OCI-LY7 (cell line): ENCODE measurements at regions of chr6 and their contacts with region 1.

Region 1: DNA sequence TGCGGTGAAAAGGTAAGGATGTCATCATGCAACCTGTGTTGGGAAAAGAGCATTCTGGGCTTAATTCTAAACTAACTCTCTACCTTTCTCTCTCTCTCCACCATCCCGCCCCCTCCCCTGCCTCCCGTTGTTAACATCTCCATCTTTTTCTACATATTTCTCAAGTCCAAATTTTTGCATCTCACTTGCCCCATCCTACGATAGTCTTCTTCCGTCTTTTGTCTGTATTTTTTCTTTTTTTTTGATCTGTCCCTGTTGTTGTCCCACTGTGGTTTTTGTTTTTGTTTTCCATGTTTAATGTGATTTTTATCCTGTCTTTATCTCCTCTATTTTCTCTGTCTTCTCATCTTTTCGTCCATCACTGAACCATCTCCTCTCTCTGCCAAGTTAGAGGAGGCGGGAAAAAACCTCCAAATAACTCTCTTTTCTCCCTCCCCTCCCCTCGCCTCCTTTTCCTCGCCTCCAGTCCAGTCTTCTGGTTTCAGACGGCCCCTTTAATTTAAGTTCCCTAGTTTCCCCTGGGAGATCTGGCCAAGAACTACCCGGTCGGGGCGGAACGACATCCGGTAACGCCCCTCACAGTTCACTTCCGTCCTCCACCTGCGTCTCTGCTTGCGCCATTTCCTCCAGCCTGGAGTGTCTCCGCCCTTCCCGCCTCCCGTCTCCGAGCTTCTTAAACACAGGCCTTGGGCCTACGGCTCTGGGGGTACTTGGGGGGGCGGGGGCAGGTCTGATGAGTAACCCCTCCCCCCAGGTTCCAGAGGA is at the start of gene NFKBIL1:
- DNase-seq: peak; percentile 99
- H3K4me3 ChIP-seq: peak within 1 kb of the TSS; percentile 67
- H3K27ac ChIP-seq: peak within 1 kb of the TSS; percentile 64
- H3K4me1 ChIP-seq: peaks cover 62% of the 10 kb centered on the region
- CTCF ChIP-seq: peak; percentile 28; the same call in 1 of the 2 replicates
- total RNA-seq, gene NFKBIL1: 17.1 and 21.8 TPM in 2 replicates

Region 2: GRCh38 chr6:30759575-30760239 is 787.4 kb before region 1 on chr6:
- CTCF ChIA-PET with region 1: no interaction called
- POLR2A ChIA-PET with region 1: no interaction called
- intact Hi-C with region 1: no loop called
- DNase-seq: no peak
- H3K4me3 ChIP-seq: no peak overlapping the region
- H3K27ac ChIP-seq: no peak overlapping the region
- H3K4me1 ChIP-seq: peaks cover 8% of the 10 kb centered on the region
- CTCF ChIP-seq: no peak

Region 3: GRCh38 chr6:31383149-31383548 is 164.0 kb before region 1 on chr6:
- CTCF ChIA-PET with region 1: no interaction called
- POLR2A ChIA-PET with region 1: no interaction called
- intact Hi-C with region 1: no loop called
- DNase-seq: no peak
- H3K4me3 ChIP-seq: no peak overlapping the region
- H3K27ac ChIP-seq: no peak overlapping the region
- H3K4me1 ChIP-seq: no peaks in the 10 kb centered on the region
- CTCF ChIP-seq: no peak

Region 4: DNA sequence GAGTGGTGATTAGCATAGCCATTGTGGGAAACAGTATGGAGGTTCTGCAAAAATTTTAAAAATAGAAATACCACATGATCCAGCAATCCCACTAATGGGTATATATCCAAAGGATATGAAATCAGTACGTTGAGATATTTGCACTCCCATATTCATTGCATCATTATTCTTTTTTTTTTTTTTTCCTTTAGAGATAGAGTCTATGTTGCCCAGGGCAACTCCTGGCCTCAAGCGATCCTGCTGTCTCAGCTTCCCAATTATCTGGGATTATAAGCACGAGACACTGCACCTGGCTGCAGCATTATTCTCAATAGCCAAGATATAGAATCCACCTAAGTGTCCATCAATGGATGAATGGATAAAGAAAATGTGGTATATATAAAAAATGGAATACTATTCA is 25.3 kb before region 1 on chr6:
- CTCF ChIA-PET with region 1: no interaction called
- POLR2A ChIA-PET with region 1: no interaction called
- intact Hi-C with region 1: no loop called
- DNase-seq: no peak
- H3K4me3 ChIP-seq: no peak overlapping the region
- H3K27ac ChIP-seq: no peak overlapping the region
- H3K4me1 ChIP-seq: no peaks in the 10 kb centered on the region
- CTCF ChIP-seq: no peak

Region 5: GRCh38 chr6:31575335-31575901 is 28.3 kb after region 1 on chr6 and contains the start of gene TNF:
- CTCF ChIA-PET with region 1: interaction called, 7 read pairs
- POLR2A ChIA-PET with region 1: interaction called, 10 read pairs
- intact Hi-C with region 1: no loop called
- DNase-seq: peak; percentile 61
- H3K4me3 ChIP-seq: peak within 1 kb of the TSS; percentile 69
- H3K27ac ChIP-seq: peak within 1 kb of the TSS; percentile 42
- H3K4me1 ChIP-seq: peaks cover 88% of the 10 kb centered on the region
- CTCF ChIP-seq: no peak
- total RNA-seq, gene TNF: 1.7 and 3.5 TPM in 2 replicates

Region 6: GRCh38 chr6:31597006-31597405 is 49.9 kb after region 1 on chr6:
- CTCF ChIA-PET with region 1: interaction called, 32 read pairs
- POLR2A ChIA-PET with region 1: interaction called, 34 read pairs
- intact Hi-C with region 1: loop called (anchors 1 kb)
- DNase-seq: peak; percentile 82
- H3K4me3 ChIP-seq: no peak overlapping the region
- H3K27ac ChIP-seq: no peak overlapping the region
- H3K4me1 ChIP-seq: peaks cover 29% of the 10 kb centered on the region
- CTCF ChIP-seq: peak; percentile 84

Region 7: DNA sequence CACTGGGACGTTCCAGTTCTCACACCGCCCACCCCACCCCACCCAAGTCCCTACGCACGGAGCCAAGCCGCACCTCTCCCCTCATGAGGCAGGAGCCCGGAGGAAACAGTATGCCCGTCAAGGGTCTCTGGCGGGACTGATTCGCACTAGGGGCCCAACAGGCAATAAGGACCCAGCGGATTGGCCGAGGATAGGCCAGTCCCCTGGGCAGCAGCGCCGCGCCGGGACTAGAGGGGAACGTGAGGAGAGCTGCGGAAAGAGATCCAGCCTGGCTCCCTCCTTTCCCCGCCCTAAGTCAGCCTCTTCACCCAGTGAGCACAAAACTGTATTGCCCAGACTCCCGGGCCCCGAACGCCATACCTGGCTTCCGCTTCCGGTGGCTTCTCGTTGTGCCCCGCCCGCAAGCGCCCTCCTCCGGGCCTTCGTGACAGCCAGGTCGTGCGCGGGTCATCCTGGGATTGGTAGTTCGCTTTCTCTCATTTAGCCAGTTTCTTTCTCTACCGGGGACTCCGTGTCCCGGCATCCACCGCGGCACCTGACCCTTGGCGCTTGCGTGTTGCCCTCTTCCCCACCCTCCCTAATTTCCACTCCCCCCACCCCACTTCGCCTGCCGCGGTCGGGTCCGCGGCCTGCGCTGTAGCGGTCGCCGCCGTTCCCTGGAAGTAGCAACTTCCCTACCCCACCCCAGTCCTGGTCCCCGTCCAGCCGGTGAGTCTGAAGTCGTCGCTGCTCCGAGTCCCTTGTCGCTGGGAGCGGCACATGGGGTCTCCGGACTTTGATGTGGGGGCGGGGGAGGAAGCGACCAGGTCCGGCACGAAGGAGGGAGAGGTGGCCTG is 118.6 kb after region 1 on chr6 and contains the start of gene CSNK2B:
- CTCF ChIA-PET with region 1: no interaction called
- POLR2A ChIA-PET with region 1: interaction called, 4 read pairs
- intact Hi-C with region 1: loop called (anchors 1 kb)
- DNase-seq: peak; percentile 98
- H3K4me3 ChIP-seq: peak within 1 kb of the TSS; percentile 99
- H3K27ac ChIP-seq: peak within 1 kb of the TSS; percentile 90
- H3K4me1 ChIP-seq: peaks cover 43% of the 10 kb centered on the region
- CTCF ChIP-seq: no peak
- total RNA-seq, gene CSNK2B: 207 and 230 TPM in 2 replicates